ENCODE measurements at regions of chr11 and their contacts with region 1.

Region 1: DNA sequence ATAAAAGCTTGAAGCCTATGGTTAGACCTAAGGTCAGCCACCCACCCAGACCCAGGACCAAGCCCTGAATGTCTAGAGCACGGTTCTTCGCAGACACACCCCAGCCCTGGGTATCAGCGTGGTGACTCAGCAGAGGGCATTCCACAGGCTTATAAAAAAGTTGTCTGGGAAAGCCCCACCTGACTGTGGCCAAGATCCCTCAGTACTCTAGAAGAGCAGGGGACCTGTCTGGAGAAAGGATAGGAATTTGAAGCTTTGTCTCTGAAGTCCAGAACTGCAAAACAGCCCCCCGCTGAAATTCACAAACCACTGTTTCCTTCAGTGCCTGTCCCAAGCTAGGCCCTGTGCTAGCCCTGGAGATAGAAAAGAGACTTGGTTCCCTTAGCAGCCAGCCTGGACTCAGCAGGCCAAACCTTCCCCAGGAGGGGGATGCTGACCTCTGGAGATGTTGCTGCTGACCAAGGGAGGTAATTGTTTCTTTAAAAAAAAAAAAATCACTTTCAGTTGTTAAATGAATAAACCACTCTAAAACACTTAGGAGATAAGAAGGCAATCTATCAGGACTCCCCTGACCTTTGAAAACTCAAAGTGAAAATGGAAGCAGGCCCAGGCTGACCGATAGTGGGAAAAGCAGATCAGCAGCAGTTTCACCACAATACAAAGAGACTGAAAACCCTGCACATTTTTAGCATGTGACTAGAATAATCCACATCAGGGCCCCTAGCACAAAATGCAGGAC is 113.9 kb downstream of the ABTB2 start:
- DNase-seq: peak; percentile 92
- H3K4me3 ChIP-seq: no peak overlapping the region
- H3K27ac ChIP-seq: peak overlapping the region; percentile 47
- H3K4me1 ChIP-seq: peaks cover 29% of the 10 kb centered on the region
- H3K27me3 ChIP-seq: no peaks in the 10 kb centered on the region
- CTCF ChIP-seq: no peak

Region 2: DNA sequence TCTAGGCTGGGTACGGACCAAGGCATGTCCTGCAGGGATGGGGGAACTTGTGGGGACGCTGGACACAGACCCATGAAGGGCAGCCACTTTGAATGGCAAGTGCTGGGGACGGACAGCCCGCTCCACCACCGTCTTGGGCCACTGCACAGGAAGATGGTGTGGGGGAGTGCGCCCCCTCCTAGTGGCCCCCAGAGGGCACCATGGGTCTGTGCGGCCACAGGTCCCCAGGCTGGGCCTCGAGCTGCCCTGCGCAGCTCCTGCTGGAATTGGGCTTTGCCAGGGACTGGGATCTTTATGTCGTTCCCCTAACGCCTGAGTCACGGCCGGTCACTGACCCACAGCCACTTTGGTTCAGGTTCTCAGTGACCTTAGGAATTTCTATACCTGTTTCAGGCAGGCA is 94.1 kb before region 1 on chr11:
- CTCF ChIA-PET with region 1: no interaction called
- dilution Hi-C with region 1: no loop called
- in situ Hi-C with region 1: no loop called
- intact Hi-C with region 1: no loop called
- DNase-seq: no peak
- H3K4me3 ChIP-seq: no peak overlapping the region
- H3K27ac ChIP-seq: no peak overlapping the region
- H3K4me1 ChIP-seq: no peaks in the 10 kb centered on the region
- H3K27me3 ChIP-seq: no peaks in the 10 kb centered on the region
- CTCF ChIP-seq: peak in 1 of 2 donors; percentile 27

Region 3: GRCh38 chr11:34192481-34193401 is 51.2 kb before region 1 on chr11:
- CTCF ChIA-PET with region 1: no interaction called
- dilution Hi-C with region 1: no loop called
- in situ Hi-C with region 1: no loop called
- intact Hi-C with region 1: loop called (anchors 2 kb)
- DNase-seq: peak; percentile 98
- H3K4me3 ChIP-seq: peak overlapping the region in 2 of 3 experiments; percentile 1 to 13
- H3K27ac ChIP-seq: peak overlapping the region; percentile 45
- H3K4me1 ChIP-seq: peaks cover 18% of the 10 kb centered on the region
- H3K27me3 ChIP-seq: no peaks in the 10 kb centered on the region
- CTCF ChIP-seq: no peak

Region 4: GRCh38 chr11:34214961-34215805 is 28.7 kb before region 1 on chr11:
- CTCF ChIA-PET with region 1: no interaction called
- dilution Hi-C with region 1: no loop called
- in situ Hi-C with region 1: no loop called
- intact Hi-C with region 1: loop called (anchors 2 kb)
- DNase-seq: peak; percentile 97
- H3K4me3 ChIP-seq: no peak overlapping the region
- H3K27ac ChIP-seq: peak overlapping the region; percentile 50
- H3K4me1 ChIP-seq: peaks cover 12% of the 10 kb centered on the region
- H3K27me3 ChIP-seq: no peaks in the 10 kb centered on the region
- CTCF ChIP-seq: no peak

Region 5: GRCh38 chr11:34302046-34302921 is 58.4 kb after region 1 on chr11:
- CTCF ChIA-PET with region 1: no interaction called
- dilution Hi-C with region 1: loop called (anchors 10 kb)
- in situ Hi-C with region 1: no loop called
- intact Hi-C with region 1: no loop called
- DNase-seq: peak; percentile 77
- H3K4me3 ChIP-seq: no peak overlapping the region
- H3K27ac ChIP-seq: no peak overlapping the region
- H3K4me1 ChIP-seq: peaks cover 15% of the 10 kb centered on the region
- H3K27me3 ChIP-seq: no peaks in the 10 kb centered on the region
- CTCF ChIP-seq: no peak

Region 6: GRCh38 chr11:34327804-34328631 is 84.1 kb after region 1 on chr11:
- CTCF ChIA-PET with region 1: no interaction called
- dilution Hi-C with region 1: no loop called
- in situ Hi-C with region 1: no loop called
- intact Hi-C with region 1: no loop called
- DNase-seq: no peak
- H3K4me3 ChIP-seq: no peak overlapping the region
- H3K27ac ChIP-seq: no peak overlapping the region
- H3K4me1 ChIP-seq: peaks cover 15% of the 10 kb centered on the region
- H3K27me3 ChIP-seq: no peaks in the 10 kb centered on the region
- CTCF ChIP-seq: no peak